Activated T-helper 2 cell treated with anti-CD3 and anti-CD28 coated beads, Interferon-gamma antibody, Interleukin-2, Interleukin-4, amounts not matched to agents 10 μg/mL and 5 μg/mL and 100 μg/mL, durations not matched to agents 14 hours and 24 hours and 36 hours (primary cell): ENCODE measurements at regions of chr3 and their contacts with region 1.

Region 1: GRCh38 chr3:106068795-106069194 is 200.0 kb upstream of the CBLB start:
- DNase-seq: no peak
- H3K4me3 Mint-ChIP-seq: no peak overlapping the region
- H3K27ac Mint-ChIP-seq: peak overlapping the region; percentile 83
- H3K4me1 Mint-ChIP-seq: peaks cover 15% of the 10 kb centered on the region
- H3K27me3 Mint-ChIP-seq: no peaks in the 10 kb centered on the region

Region 2: DNA sequence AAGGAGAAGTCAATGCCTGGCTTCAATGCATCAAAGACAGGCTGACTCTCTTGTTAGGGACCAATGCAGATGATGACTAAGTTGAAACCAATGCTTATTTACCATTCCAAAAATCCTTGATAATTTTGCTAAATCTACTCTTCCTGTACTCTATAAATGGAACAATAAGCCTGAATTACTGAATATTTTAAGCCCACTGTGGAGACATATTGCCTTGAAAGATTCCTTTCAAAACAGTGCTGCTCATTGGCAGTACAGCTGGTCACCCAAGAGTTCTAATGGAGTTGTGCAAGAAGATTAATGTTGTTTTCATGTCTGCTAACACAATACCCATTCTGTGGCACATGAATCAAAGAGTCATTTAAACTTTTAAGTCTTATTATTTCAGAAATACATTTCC is 19.0 kb before region 1 on chr3:
- intact Hi-C with region 1: loop called (anchors 2 kb)
- DNase-seq: no peak
- H3K4me3 Mint-ChIP-seq: no peak overlapping the region
- H3K27ac Mint-ChIP-seq: peak overlapping the region; percentile 85
- H3K4me1 Mint-ChIP-seq: peaks cover 21% of the 10 kb centered on the region
- H3K27me3 Mint-ChIP-seq: no peaks in the 10 kb centered on the region

Region 3: GRCh38 chr3:106119614-106120082 is 50.9 kb after region 1 on chr3:
- intact Hi-C with region 1: loop called (anchors 5 kb)
- DNase-seq: no peak
- H3K4me3 Mint-ChIP-seq: no peak overlapping the region
- H3K27ac Mint-ChIP-seq: peak overlapping the region; percentile 80
- H3K4me1 Mint-ChIP-seq: peaks cover 23% of the 10 kb centered on the region
- H3K27me3 Mint-ChIP-seq: no peaks in the 10 kb centered on the region

Region 4: GRCh38 chr3:106371971-106372805 is 303.4 kb after region 1 on chr3:
- intact Hi-C with region 1: no loop called
- DNase-seq: no peak
- H3K4me3 Mint-ChIP-seq: no peak overlapping the region
- H3K27ac Mint-ChIP-seq: no peak overlapping the region
- H3K4me1 Mint-ChIP-seq: no peaks in the 10 kb centered on the region
- H3K27me3 Mint-ChIP-seq: no peaks in the 10 kb centered on the region